Transverse colon (tissue), 4 donors: ENCODE measurements at regions of chr12 and their contacts with region 1.

Region 1: GRCh38 chr12:45166056-45166455 is 49.8 kb upstream of the ANO6 start:
- DNase-seq: no peak
- H3K4me3 ChIP-seq: no peak overlapping the region
- H3K27ac ChIP-seq: no peak overlapping the region
- H3K4me1 ChIP-seq: no peaks in the 10 kb centered on the region
- H3K27me3 ChIP-seq: peaks cover 13% of the 10 kb centered on the region
- CTCF ChIP-seq: no peak
- EP300 ChIP-seq: no peak
- POLR2A ChIP-seq: no peak

Region 2: DNA sequence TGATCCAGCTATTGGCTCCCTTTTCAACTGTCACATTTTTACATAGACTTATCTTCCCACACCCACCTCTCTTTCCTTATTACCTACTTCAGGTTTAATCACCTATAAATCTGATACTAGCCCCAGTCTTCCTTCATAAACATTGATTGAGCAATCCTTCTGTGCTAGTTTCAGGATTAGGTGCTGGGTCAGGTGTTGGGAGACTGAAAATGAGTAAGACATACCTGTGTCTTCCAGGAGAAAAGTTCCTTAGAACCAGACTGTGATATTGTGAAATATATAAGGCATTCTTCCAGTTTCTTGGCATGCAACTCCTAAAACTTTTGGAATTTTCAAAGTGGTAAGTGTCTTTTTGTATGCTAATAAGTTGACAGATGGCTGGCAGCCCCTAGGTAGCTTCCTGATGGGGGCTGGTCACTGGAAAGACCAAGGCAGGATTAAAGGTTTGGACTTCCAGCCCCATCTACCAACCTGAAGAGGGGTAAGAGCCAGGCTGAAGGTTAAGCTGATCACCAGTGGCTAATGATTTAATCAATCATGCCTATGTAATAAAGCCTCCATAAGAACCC is 54.4 kb after region 1 on chr12:
- in situ Hi-C with region 1: no loop called
- intact Hi-C with region 1: no loop called
- DNase-seq: no peak
- H3K4me3 ChIP-seq: no peak overlapping the region
- H3K27ac ChIP-seq: no peak overlapping the region
- H3K4me1 ChIP-seq: peaks cover 6 to 58% (median 19%) of the 10 kb centered on the region in 4 donors
- H3K27me3 ChIP-seq: peaks cover 3% of the 10 kb centered on the region
- CTCF ChIP-seq: no peak
- EP300 ChIP-seq: no peak
- POLR2A ChIP-seq: no peak

Region 3: DNA sequence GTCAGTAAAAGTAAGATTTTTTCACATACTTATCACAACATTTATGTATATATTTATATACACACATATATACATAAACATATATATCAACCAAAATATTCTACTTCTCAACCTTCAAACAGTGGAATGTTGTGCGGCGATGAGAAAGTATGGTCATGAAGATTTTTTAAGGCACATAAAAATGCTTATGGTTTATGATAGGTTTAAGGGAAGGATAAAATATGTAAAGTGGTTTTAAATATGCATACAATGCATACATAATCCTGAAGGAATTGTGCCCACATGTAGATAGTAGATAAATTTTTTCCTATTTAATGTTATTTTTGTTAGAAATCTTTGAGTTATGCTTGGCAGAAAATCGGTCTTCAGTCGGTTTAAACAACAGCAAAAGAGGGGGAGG is 232.5 kb after region 1 on chr12:
- in situ Hi-C with region 1: loop called in 1 of 4 experiments (anchors 10 kb)
- intact Hi-C with region 1: no loop called
- DNase-seq: no peak
- H3K4me3 ChIP-seq: no peak overlapping the region
- H3K27ac ChIP-seq: no peak overlapping the region
- H3K4me1 ChIP-seq: peaks cover 0 to 3% (median 0%) of the 10 kb centered on the region in 4 donors
- H3K27me3 ChIP-seq: no peaks in the 10 kb centered on the region
- CTCF ChIP-seq: no peak
- EP300 ChIP-seq: no peak
- POLR2A ChIP-seq: no peak